ENCODE measurements at regions of chr21 and their contacts with region 1.

Region 1: GRCh38 chr21:45152265-45152746 is 77.9 kb downstream of the ADARB1 start:
- DNase-seq: peak; percentile 36 to 85 (median 61)
- ATAC-seq: peak; percentile 85
- H3K4me3 ChIP-seq: no peak overlapping the region
- H3K4me3 Mint-ChIP-seq: peak overlapping the region; percentile 46
- H3K27ac ChIP-seq: no peak overlapping the region
- H3K27ac Mint-ChIP-seq: peak overlapping the region; percentile 73
- H3K4me1 ChIP-seq: peaks cover 31% of the 10 kb centered on the region
- H3K4me1 Mint-ChIP-seq: peaks cover 52% of the 10 kb centered on the region
- H3K27me3 ChIP-seq: no peaks in the 10 kb centered on the region
- H3K27me3 Mint-ChIP-seq: no peaks in the 10 kb centered on the region
- CTCF ChIP-seq: peak; percentile 69

Region 2: GRCh38 chr21:44551340-44551961 is 600.9 kb before region 1 on chr21 and contains the start of gene KRTAP10-2:
- CTCF ChIA-PET with region 1: no interaction called
- POLR2A ChIA-PET with region 1: no interaction called
- intact Hi-C with region 1: no loop called
- DNase-seq: no peak
- ATAC-seq: no peak
- H3K4me3 ChIP-seq: no peak within 1 kb of the TSS
- H3K4me3 Mint-ChIP-seq: no peak within 1 kb of the TSS
- H3K27ac ChIP-seq: no peak within 1 kb of the TSS
- H3K27ac Mint-ChIP-seq: no peak within 1 kb of the TSS
- H3K4me1 ChIP-seq: peaks cover 18% of the 10 kb centered on the region
- H3K4me1 Mint-ChIP-seq: peaks cover 30% of the 10 kb centered on the region
- H3K27me3 ChIP-seq: peaks cover 0 to 4% of the 10 kb centered on the region in 2 experiments
- H3K27me3 Mint-ChIP-seq: no peaks in the 10 kb centered on the region
- CTCF ChIP-seq: no peak
- total RNA-seq, gene KRTAP10-2: not detected

Region 3: GRCh38 chr21:45140346-45140940 is 11.9 kb before region 1 on chr21:
- CTCF ChIA-PET with region 1: interaction called, 11 read pairs
- POLR2A ChIA-PET with region 1: interaction called, 5 read pairs
- intact Hi-C with region 1: no loop called
- DNase-seq: peak; percentile 30 to 83 (median 50)
- ATAC-seq: peak; percentile 93
- H3K4me3 ChIP-seq: no peak overlapping the region
- H3K4me3 Mint-ChIP-seq: no peak overlapping the region
- H3K27ac ChIP-seq: no peak overlapping the region
- H3K27ac Mint-ChIP-seq: no peak overlapping the region
- H3K4me1 ChIP-seq: peaks cover 12% of the 10 kb centered on the region
- H3K4me1 Mint-ChIP-seq: peaks cover 21% of the 10 kb centered on the region
- H3K27me3 ChIP-seq: no peaks in the 10 kb centered on the region
- H3K27me3 Mint-ChIP-seq: no peaks in the 10 kb centered on the region
- CTCF ChIP-seq: peak; percentile 48

Region 4: GRCh38 chr21:45270306-45270821 is 118.1 kb after region 1 on chr21:
- CTCF ChIA-PET with region 1: no interaction called
- POLR2A ChIA-PET with region 1: no interaction called
- intact Hi-C with region 1: loop called in 1 of 2 experiments (anchors 5 kb)
- DNase-seq: peak in 2 of 14 experiments; percentile 15 to 29
- ATAC-seq: no peak
- H3K4me3 ChIP-seq: no peak overlapping the region
- H3K4me3 Mint-ChIP-seq: no peak overlapping the region
- H3K27ac ChIP-seq: no peak overlapping the region
- H3K27ac Mint-ChIP-seq: no peak overlapping the region
- H3K4me1 ChIP-seq: peaks cover 21% of the 10 kb centered on the region
- H3K4me1 Mint-ChIP-seq: peaks cover 15% of the 10 kb centered on the region
- H3K27me3 ChIP-seq: no peaks in the 10 kb centered on the region
- H3K27me3 Mint-ChIP-seq: no peaks in the 10 kb centered on the region
- CTCF ChIP-seq: no peak

Region 5: GRCh38 chr21:45747802-45748445 is 595.6 kb after region 1 on chr21:
- CTCF ChIA-PET with region 1: no interaction called
- POLR2A ChIA-PET with region 1: no interaction called
- intact Hi-C with region 1: no loop called
- DNase-seq: no peak
- ATAC-seq: no peak
- H3K4me3 ChIP-seq: no peak overlapping the region
- H3K4me3 Mint-ChIP-seq: no peak overlapping the region
- H3K27ac ChIP-seq: no peak overlapping the region
- H3K27ac Mint-ChIP-seq: no peak overlapping the region
- H3K4me1 ChIP-seq: no peaks in the 10 kb centered on the region
- H3K4me1 Mint-ChIP-seq: peaks cover 9% of the 10 kb centered on the region
- H3K27me3 ChIP-seq: no peaks in the 10 kb centered on the region
- H3K27me3 Mint-ChIP-seq: no peaks in the 10 kb centered on the region
- CTCF ChIP-seq: no peak

Measured in CD4-positive, alpha-beta T cell (primary cell).